ENCODE measurements at regions of chr18 and their contacts with region 1.

Region 1: GRCh38 chr18:46173393-46174341 is 69.5 kb downstream of the HAUS1 start:
- H3K4me3 Mint-ChIP-seq: peak overlapping the region; percentile 98
- H3K27ac Mint-ChIP-seq: peak overlapping the region; percentile 97
- H3K4me1 Mint-ChIP-seq: peaks cover 16% of the 10 kb centered on the region
- H3K27me3 Mint-ChIP-seq: no peaks in the 10 kb centered on the region

Region 2: DNA sequence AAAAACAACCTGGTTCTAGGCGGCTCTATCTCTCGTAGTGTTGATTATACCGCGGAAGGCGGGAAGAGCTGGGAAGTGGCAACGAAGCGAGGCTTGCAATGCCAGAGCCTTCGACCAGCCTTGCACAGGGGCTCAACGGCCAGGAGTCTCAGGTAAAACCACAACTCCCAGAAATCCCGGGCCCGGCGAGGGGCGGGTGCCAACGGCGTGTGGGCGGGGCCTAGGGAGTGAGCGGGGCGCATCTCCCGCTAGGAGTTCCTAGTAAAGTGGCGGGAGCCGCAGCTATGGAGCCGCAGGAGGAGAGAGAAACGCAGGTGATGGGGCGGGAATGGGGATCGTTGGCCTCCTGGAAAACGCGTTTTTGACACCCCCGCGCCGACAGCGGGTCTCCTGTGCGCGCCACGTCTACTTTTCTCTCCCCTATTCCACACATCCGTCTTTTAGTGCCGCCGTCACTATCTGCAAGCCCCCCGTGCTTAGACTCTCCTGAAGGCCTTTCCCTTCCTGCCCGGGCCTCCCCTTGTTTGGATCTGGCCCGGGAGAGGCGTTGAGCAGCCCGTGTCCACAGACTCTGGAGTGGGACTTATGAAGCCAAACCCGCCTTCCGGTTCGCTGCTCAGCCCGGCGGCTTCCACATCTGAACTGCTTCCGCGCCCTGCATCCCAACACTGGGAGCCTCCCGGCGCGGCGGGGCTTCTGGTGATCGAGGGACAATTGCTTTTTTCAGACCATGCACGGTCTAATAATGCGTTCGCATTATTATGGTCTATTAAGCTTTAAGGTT is 69.3 kb before region 1 on chr18 and contains the start of gene HAUS1:
- intact Hi-C with region 1: loop called (anchors 5 kb)
- H3K4me3 Mint-ChIP-seq: peak within 1 kb of the TSS; percentile 99
- H3K27ac Mint-ChIP-seq: peak within 1 kb of the TSS; percentile 89
- H3K4me1 Mint-ChIP-seq: peaks cover 13% of the 10 kb centered on the region
- H3K27me3 Mint-ChIP-seq: no peaks in the 10 kb centered on the region

Region 3: DNA sequence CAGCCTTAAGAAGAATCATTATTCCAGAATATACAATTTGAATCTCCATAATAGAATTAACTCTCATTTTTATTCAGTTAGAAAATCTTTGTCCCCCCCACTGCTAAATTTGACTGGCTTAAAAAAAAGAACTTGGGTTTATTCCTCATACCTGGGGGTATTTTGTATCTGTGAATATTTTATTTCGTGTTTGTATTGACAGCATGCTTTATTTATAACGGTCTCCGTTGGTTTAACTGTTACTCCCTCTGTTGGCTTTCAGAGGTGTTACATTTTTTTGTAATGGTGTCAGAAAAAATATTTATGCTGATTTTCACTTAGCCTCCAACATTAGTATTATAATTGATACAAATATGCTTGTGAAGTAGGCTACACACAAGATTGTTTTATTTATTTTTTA is 39.6 kb after region 1 on chr18:
- intact Hi-C with region 1: loop called (anchors 1 kb)
- H3K4me3 Mint-ChIP-seq: no peak overlapping the region
- H3K27ac Mint-ChIP-seq: no peak overlapping the region
- H3K4me1 Mint-ChIP-seq: peaks cover 42% of the 10 kb centered on the region
- H3K27me3 Mint-ChIP-seq: no peaks in the 10 kb centered on the region

Region 4: DNA sequence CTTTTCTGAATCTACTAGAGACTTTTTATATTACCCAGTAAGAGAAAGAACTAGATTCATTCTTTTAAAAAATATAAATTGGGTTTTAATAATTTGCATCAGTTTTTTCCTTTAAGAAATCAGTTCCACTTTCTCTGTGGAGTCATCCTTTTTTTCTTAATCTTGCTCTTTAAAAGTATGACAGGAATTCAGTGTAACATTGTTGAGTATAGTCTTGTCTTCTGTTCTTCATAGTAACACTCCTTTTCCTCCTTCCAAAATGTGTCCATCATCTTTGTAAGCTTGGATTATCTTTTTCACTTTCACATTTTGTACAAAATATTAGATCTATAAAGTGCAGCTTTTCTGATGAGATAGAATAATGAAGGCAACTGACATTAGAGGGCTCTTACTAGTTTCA is 65.9 kb after region 1 on chr18:
- intact Hi-C with region 1: no loop called
- H3K4me3 Mint-ChIP-seq: no peak overlapping the region
- H3K27ac Mint-ChIP-seq: no peak overlapping the region
- H3K4me1 Mint-ChIP-seq: no peaks in the 10 kb centered on the region
- H3K27me3 Mint-ChIP-seq: no peaks in the 10 kb centered on the region

Region 5: DNA sequence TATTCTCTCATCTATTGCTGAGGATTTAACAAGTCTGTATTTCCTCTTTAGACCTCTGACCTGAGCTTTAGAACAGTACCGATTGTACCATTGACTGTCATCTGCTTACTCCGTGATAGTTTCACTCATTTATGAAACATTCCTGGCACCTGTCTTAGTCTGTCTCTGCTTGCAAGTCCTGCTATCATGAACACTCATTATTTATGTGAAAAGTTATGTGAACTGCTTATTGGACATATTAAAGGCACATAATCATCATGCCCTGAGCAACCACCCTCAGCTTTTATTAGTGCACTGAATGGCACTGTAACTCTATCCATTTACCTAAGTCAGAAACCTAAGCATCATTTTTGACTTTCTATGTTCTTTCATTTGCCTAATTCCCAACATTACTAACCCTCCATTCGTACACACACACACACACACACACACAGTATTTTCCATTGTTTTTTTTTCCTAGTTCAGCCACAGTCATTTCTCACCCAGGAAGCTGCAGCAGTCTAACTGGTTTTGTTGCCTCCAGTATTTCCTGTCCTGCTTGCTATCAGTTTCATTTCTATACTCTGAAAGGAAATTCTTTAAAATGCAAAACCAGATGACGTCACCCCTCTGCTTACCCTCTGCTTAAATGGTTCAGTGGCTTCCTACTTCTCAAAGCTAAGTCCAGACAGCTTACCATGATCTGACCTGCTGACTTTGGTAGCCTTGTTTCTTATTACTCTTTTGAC is 76.6 kb after region 1 on chr18:
- intact Hi-C with region 1: loop called (anchors 5 kb)
- H3K4me3 Mint-ChIP-seq: peak overlapping the region; percentile 53
- H3K27ac Mint-ChIP-seq: peak overlapping the region; percentile 79
- H3K4me1 Mint-ChIP-seq: peaks cover 36% of the 10 kb centered on the region
- H3K27me3 Mint-ChIP-seq: no peaks in the 10 kb centered on the region

Region 6: DNA sequence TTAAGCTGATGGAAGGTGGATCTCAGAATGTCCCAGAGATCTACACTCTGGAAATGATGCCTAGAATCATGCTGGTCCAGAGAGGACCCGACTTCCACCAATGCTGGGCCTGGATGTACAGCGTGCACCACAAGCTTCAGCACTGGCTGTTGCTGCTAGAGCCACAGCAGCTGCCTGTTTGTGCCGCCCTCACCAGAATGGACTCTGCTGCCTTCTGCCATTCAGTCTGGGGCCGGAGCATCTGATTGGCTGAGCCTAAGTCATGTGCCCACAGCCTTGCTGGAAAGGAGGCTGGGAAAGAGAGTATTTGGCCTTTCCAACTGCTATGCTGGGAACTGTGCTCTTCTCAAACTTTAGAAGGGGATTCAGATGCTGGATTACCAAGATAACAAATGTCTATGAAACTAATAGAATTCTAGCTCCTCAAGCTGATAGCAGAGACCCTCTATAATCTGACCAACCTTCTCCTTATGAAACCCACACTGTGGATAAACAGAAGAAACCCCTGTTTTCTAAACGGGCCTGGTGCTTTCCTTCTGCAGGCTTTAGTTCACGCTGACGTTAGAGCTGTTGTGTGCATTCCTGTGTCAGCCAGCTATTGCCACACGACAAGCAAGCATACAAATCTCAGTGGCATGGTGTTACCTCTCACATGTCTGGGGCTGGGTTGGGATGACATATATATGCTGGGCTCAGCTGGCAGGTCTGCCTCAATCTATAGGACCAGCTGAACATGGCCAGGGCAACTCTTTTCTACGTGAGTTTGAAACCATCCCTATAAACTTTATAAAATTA is 487.5 kb after region 1 on chr18:
- intact Hi-C with region 1: loop called (anchors 10 kb)
- H3K4me3 Mint-ChIP-seq: no peak overlapping the region
- H3K27ac Mint-ChIP-seq: no peak overlapping the region
- H3K4me1 Mint-ChIP-seq: no peaks in the 10 kb centered on the region
- H3K27me3 Mint-ChIP-seq: peaks cover 5% of the 10 kb centered on the region

Measured in dendritic cell treated with granulocyte-macrophage colony-stimulating factor and Interleukin-4, amounts not matched to agents 40 ng/mL and 50 ng/mL, for 4 days (primary cell).